IMR-90 (cell line): ENCODE measurements at regions of chr2 and their contacts with region 1.

Region 1: DNA sequence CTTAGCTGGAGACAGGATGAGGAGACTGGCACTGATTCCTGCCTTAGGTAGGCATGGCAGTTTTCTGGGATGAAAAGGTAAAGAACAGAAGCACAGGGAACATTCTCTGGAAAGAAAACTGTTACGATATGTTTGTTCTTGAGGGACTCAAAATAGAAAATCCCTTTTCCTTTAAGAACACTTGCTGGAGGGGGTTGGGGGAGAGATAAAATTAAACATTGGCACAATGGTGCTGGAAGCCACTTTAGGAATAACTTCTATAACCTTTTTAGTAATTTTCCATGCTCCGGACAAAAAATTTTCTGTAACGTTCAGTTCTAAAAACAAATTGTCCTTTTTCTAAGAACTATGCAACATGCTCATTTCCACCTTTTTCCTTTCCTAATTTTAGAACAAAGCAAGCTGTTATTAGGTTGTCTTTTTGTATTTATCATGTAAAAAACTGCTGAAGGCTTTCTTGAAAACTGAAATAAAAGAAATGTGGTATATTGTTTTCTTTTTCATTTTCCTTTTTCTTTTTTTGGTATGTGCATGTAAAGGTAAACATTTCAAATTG is 343.8 kb downstream of the EPHA4 start:
- DNase-seq: no peak
- ATAC-seq: no peak
- H3K4me3 ChIP-seq: no peak overlapping the region
- H3K27ac ChIP-seq: no peak overlapping the region
- H3K4me1 ChIP-seq: no peaks in the 10 kb centered on the region
- H3K27me3 ChIP-seq: no peaks in the 10 kb centered on the region
- CTCF ChIP-seq: no peak
- POLR2A ChIP-seq: no peak
- RAD21 ChIP-seq: no peak

Region 2: GRCh38 chr2:221210686-221211085 is 17.6 kb before region 1 on chr2:
- CTCF ChIA-PET with region 1: no interaction called
- POLR2A ChIA-PET with region 1: no interaction called
- dilution Hi-C with region 1: no loop called
- in situ Hi-C with region 1: no loop called
- intact Hi-C with region 1: loop called (anchors 2 kb)
- DNase-seq: no peak
- ATAC-seq: no peak
- H3K4me3 ChIP-seq: no peak overlapping the region
- H3K27ac ChIP-seq: no peak overlapping the region
- H3K4me1 ChIP-seq: no peaks in the 10 kb centered on the region
- H3K27me3 ChIP-seq: no peaks in the 10 kb centered on the region; the same call in 1 of the 2 replicates
- CTCF ChIP-seq: no peak
- POLR2A ChIP-seq: no peak
- RAD21 ChIP-seq: no peak